ENCODE measurements at regions of chr1 and their contacts with region 1.

Region 1: DNA sequence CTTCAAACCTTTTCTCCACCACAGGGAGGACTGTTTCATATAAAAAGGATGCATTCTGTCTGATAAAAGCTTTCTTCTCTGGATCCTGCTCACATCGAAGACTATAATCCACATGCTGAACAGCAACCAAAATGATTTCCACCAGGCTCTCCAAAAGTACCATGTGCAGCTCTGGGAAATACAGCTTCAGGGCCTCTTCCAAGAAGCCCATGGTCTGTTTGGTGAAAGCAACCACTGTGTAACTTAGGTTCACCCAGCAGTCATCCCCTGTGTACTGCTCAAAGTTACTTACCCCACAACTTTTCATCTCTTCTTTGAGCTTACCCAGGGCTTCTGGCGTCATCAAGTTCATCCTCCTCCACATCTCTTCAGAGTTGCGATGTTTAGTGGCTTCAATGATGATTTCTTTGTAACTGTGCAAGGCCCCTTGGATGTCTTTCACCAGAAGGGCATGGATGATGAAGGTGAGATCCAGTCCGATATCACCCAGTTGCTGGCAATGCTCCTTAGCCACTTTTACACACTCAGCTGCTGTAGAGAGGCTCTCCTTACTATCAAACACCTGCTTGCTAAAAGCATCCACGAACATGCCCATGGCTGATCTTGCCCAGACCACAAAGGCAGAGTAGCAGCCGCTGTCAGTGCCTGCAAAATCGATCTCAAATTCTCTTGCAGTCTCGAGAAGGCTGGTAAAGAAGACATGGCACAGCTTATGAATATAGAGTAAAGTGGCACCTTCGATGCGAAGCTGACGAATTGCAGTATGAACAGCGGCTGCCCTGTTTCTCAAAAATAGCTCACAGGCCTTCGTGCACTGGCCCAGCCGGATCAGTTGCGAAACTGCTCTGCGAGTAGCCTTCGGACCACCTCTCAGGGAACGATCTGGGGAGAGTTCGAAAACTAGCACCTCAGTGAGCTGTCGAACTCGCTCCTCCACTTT is 1.7 kb downstream of the EXOC8 start:
- DNase-seq: no peak
- H3K4me3 ChIP-seq: peak overlapping the region; percentile 79
- H3K27me3 ChIP-seq: no peaks in the 10 kb centered on the region
- CTCF ChIP-seq: no peak

Region 2: DNA sequence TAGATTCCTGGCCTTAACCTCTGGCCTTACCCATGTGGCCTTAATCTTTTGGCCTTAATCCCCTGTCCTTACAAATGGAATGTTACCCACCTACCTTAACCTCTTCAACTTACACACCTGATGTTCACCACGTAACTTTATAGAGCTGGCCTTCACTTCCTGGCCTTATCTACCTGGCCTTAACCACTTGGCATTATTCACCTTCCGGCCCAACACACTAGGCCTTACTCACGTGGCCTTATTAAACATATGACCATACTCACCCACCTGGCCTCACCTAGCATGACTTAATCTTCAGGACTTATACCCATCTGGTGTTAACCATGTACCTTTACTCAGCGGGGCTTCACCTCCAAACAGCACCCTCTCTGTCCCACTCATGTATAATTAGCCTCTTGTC is 40.0 kb before region 1 on chr1:
- CTCF ChIA-PET with region 1: no interaction called
- POLR2A ChIA-PET with region 1: no interaction called
- DNase-seq: no peak
- H3K4me3 ChIP-seq: no peak overlapping the region
- H3K27me3 ChIP-seq: no peaks in the 10 kb centered on the region
- CTCF ChIP-seq: no peak

Region 3: GRCh38 chr1:231315887-231316286 is 20.0 kb before region 1 on chr1:
- CTCF ChIA-PET with region 1: interaction called, 11 read pairs
- POLR2A ChIA-PET with region 1: no interaction called
- DNase-seq: no peak
- H3K4me3 ChIP-seq: no peak overlapping the region
- H3K27me3 ChIP-seq: no peaks in the 10 kb centered on the region; the same call in 1 of the 2 replicates
- CTCF ChIP-seq: peak; percentile 67

Region 4: GRCh38 chr1:231383159-231383860 is 47.4 kb after region 1 on chr1:
- CTCF ChIA-PET with region 1: no interaction called
- POLR2A ChIA-PET with region 1: no interaction called
- DNase-seq: no peak
- H3K4me3 ChIP-seq: no peak overlapping the region
- H3K27me3 ChIP-seq: no peaks in the 10 kb centered on the region
- CTCF ChIP-seq: no peak

Region 5: GRCh38 chr1:231395076-231395995 is 59.4 kb after region 1 on chr1:
- CTCF ChIA-PET with region 1: no interaction called
- POLR2A ChIA-PET with region 1: no interaction called
- DNase-seq: peak; percentile 90
- H3K4me3 ChIP-seq: no peak overlapping the region
- H3K27me3 ChIP-seq: no peaks in the 10 kb centered on the region
- CTCF ChIP-seq: no peak